Activated naive CD4-positive, alpha-beta T cell treated with anti-CD3 and anti-CD28 coated beads for 36 hours (primary cell): ENCODE measurements at regions of chr17 and their contacts with region 1.

Region 1: GRCh38 chr17:57849874-57850754 is at the start of gene MRPS23:
- DNase-seq: peak; percentile 98
- H3K4me3 Mint-ChIP-seq: peak within 1 kb of the TSS; percentile 91
- H3K27ac Mint-ChIP-seq: peak within 1 kb of the TSS; percentile 95
- H3K4me1 Mint-ChIP-seq: peaks cover 28% of the 10 kb centered on the region
- H3K27me3 Mint-ChIP-seq: no peaks in the 10 kb centered on the region
- total RNA-seq, gene MRPS23: 57.5 to 59.1 TPM

Region 2: DNA sequence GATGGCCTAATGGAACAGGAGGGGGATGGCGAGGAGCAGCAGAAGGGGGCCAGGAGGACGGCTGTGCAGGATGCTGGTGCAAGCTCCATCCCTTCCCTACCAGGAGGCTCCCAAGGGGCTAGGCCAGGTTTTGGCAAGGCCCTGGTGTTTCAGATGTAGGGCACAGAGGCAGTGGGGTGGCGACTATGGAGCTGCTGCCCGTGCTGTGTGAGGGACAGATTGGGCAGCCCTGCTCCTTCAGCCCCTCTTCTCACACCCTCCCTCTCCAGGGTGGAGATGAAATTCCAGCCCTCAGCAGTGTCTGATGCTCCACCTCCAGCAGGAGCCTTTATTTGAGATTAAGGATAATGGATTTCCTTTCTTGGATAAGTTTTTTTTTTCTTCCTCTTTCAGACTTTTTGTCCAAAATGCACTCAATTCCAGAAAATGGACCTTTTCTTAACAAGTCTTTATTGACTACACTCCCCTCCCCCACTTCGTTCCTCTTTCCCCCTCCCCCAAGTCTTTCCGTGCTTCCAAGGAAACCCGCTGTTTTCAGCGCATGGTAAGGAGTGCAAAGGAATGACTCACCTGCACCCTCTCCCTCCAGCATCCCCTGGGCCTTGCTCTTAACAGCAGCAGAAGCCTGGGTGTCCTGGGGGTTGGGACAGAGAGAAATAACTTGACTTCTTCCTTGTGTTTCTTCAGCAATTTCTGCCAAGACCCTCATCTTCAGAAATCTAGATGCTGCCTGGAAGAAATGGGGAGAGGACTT is 200.2 kb before region 1 on chr17:
- CTCF ChIA-PET with region 1: no interaction called
- intact Hi-C with region 1: no loop called
- DNase-seq: no peak
- H3K4me3 Mint-ChIP-seq: no peak overlapping the region
- H3K27ac Mint-ChIP-seq: no peak overlapping the region
- H3K4me1 Mint-ChIP-seq: peaks cover 7% of the 10 kb centered on the region
- H3K27me3 Mint-ChIP-seq: no peaks in the 10 kb centered on the region

Region 3: DNA sequence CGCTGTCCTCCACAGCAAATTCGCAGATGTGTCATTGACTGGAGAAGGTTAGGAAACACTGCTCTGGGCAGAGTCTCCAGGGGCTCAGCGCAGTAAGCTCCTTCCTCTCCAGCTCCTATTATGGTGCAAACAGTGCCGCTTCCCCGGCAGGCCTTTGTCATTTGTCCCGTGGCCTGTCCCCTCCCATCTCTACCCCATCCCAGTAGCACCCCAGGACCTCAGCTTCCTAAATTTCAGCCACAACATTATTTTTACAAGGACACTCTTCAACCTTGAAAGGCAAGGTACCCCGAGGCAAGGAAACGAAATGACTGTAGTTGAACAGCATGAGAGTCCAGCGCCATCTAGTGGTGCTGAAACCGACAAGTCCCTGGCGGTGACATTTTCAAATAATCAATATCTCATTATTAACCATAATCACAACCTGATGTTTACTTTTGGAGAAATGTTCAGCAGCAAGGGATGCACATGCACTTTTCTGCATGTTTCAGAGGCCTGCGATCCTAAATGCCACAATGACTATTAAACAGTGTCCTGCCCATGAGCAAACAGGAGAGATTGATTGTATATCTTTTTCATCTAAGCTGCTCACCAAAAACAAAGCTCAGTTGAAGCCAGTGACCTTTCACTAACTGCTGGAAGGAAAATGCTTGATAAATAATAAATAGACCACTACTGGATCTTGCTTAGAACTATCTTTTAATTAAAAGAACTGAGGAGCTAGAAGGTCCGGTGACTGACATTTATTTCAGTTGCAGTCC is 16.8 kb before region 1 on chr17:
- CTCF ChIA-PET with region 1: interaction called, 28 read pairs
- intact Hi-C with region 1: no loop called
- DNase-seq: peak; percentile 83
- H3K4me3 Mint-ChIP-seq: no peak overlapping the region
- H3K27ac Mint-ChIP-seq: no peak overlapping the region
- H3K4me1 Mint-ChIP-seq: peaks cover 4% of the 10 kb centered on the region
- H3K27me3 Mint-ChIP-seq: no peaks in the 10 kb centered on the region

Region 4: DNA sequence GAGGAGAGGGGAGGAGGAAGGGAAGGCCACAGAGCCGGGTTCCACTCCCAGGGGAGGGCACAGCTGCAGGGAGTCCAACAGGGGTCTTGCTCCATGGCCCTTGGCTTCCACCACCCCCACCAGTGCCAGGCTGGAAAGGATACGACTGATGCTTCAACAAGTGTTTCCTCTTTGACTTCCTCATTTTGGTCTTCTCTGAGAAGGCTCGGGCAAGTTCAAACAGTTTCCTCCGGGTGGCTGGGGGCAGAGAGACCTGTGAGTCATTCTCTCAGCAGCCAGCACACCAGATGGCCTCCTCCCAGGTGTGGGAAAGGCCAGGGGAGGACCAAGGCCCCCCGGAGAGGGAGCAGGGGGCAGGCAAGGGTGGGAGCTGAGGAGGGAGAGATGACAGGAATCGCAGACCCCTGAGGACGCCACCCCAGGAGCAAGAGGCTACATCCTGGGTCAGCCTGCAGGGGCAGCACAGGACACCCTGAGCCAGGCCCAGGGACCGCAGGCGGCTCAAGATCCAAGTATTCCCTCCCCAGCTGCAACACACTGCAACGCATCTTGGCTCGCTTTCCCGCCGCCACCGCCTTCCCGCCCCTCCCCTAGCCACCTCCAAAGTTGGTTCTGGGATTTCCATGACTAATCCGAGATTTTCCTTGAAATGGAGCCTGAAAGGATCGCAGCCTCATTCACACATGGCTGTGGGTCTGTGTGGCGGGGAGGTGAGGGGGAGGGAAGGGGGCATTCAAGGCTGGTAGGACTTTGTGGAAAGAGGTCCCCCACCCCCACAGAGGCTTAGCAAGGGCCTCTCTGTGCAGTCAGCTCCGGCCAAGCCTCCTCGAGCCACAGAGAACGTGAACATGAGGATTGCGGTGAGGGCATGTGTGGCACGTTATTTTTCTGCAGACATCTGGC is 18.1 kb after region 1 on chr17:
- CTCF ChIA-PET with region 1: no interaction called
- intact Hi-C with region 1: loop called (anchors 1 kb)
- DNase-seq: peak; percentile 61
- H3K4me3 Mint-ChIP-seq: no peak overlapping the region
- H3K27ac Mint-ChIP-seq: no peak overlapping the region
- H3K4me1 Mint-ChIP-seq: peaks cover 10% of the 10 kb centered on the region
- H3K27me3 Mint-ChIP-seq: no peaks in the 10 kb centered on the region

Region 5: GRCh38 chr17:57995076-57995956 is 145.2 kb after region 1 on chr17:
- CTCF ChIA-PET with region 1: interaction called, 28 read pairs
- intact Hi-C with region 1: loop called (anchors 1 kb)
- DNase-seq: peak; percentile 80
- H3K4me3 Mint-ChIP-seq: peak overlapping the region; percentile 14
- H3K27ac Mint-ChIP-seq: peak overlapping the region; percentile 68
- H3K4me1 Mint-ChIP-seq: peaks cover 70% of the 10 kb centered on the region
- H3K27me3 Mint-ChIP-seq: no peaks in the 10 kb centered on the region

Region 6: DNA sequence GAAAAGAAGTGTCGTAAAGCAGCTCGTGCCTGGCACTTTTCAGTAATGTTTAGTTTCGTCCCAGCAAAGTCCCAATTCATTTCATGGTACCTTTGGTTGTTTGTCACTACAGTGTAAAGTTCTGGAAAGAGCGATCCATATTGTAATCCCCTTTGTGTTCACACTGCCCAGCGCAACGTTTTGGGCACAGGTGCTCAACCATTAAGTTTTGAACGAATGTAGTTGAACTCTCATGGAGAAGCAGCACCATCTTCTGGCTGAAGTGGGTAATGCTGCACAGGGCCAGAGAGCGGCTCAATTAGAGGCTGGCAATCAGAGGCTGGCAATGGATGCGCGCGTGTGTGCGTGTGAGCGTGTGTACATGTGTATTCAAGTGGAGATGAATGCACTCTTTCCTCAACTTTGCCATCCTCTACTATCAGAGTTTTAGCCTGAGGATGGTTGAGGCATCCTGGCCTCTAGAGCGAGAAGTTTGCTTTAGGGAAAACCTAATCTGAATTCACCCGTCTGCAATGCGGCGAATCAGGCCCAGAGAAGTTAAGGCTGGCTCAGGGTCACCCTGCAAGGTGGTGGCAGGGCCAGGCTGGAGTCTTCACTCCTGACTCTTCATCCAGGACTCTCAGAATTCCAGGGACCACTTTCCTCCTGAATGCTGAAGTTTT is 263.0 kb after region 1 on chr17:
- CTCF ChIA-PET with region 1: interaction called, 6 read pairs
- intact Hi-C with region 1: loop called (anchors 2 kb)
- DNase-seq: peak; percentile 94
- H3K4me3 Mint-ChIP-seq: no peak overlapping the region
- H3K27ac Mint-ChIP-seq: no peak overlapping the region
- H3K4me1 Mint-ChIP-seq: no peaks in the 10 kb centered on the region
- H3K27me3 Mint-ChIP-seq: no peaks in the 10 kb centered on the region